ENCODE measurements at regions of chr13 and their contacts with region 1.

Region 1: GRCh38 chr13:99959538-99960230 is 11.9 kb downstream of the ZIC5 start:
- DNase-seq: no peak
- H3K4me3 Mint-ChIP-seq: no peak overlapping the region
- H3K27ac Mint-ChIP-seq: no peak overlapping the region
- H3K4me1 Mint-ChIP-seq: no peaks in the 10 kb centered on the region
- H3K27me3 Mint-ChIP-seq: peaks cover 78% of the 10 kb centered on the region

Region 2: DNA sequence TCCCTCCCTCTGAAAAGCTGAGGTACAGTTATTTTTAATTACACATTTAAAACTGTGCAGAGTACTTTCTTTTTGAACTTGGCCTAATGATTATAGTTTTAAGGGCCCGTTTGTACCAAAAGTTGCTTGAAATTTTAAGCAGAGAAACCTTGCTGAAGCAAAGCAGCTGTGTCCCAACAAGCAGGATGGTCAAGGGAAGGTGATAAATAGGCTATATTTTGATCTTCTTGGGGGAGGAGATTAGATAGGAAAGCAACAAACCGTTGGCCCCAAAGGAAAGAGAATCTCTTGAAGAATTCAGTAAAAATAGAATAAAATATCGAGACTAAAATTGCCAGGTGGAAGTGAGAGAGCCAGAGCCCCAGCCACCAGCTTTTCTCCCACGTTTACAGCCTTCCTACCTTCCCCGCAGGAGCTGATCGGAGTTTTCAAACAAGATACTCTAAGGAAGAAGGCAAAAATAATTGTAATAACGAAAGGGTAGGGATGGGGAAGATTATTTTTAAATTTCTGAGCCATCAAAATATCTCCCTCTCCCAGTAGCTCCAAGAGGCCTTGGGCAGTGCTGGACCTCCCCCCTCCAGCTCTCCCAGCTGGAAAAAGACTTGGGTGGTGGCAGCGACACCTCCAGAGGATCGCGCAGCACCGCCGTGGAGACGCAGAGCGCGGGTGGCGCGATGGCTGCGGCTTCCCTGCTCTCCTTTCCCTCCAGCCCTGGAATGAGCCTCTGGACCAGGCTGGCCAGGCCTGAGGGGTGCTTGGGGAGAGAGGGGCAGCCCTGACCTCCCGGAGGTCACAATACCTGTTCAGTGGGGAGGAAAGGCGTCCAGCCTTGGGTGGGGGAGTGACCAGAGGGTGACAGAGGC is 27.7 kb after region 1 on chr13:
- intact Hi-C with region 1: loop called (anchors 2 kb)
- DNase-seq: no peak
- H3K4me3 Mint-ChIP-seq: no peak overlapping the region
- H3K27ac Mint-ChIP-seq: no peak overlapping the region
- H3K4me1 Mint-ChIP-seq: peaks cover 6% of the 10 kb centered on the region
- H3K27me3 Mint-ChIP-seq: peaks cover 87% of the 10 kb centered on the region

Measured in activated T-helper 2 cell treated with anti-CD3 and anti-CD28 coated beads, Interferon-gamma antibody, Interleukin-2, Interleukin-4, amounts not matched to agents 10 μg/mL and 5 μg/mL and 100 μg/mL, durations not matched to agents 14 hours and 24 hours and 36 hours (primary cell).